ENCODE measurements at regions of chr3 and their contacts with region 1.

Region 1: DNA sequence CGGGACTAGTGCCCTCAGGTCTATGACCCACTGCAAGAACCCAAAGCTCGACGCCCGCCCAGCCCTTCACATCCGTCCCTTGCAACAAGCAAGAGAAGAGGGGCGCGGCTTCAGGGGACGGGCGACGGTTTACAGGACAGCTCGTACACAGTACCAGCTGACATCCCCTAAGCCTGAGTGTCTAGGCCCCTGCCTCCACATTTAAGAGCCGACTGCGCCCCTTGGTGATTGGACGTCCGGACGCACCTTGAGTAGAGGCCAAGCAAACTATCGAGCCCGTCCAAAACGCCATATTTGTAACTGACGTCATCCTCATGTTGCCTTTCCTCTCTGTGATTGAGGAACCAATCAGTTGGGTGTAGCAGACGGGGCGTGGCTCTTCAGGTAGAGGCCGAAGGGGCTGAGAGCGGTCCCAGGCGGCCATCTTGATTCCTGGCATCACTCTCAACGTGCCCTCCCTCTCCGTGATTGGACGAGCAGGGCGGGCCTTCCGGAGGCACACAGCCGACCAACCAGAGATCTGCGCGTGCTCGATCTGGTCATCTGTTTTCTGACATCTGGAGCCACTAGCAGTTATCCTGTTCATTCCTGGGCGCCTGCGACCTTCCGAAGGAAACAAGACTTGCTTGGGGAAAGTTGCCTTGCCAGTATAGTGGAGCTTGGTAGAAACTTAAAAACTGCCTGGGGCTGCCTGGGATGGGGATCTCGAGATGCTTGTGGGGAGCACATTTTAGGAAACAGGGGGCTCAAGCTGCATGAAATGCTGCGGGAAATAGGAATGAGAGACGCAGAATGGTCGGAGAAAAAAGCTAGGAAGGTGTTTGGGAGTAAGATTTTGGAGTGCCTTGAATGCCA is 4.0 kb upstream of the RPL14 start:
- DNase-seq: peak; percentile 99
- H3K4me3 ChIP-seq: peak overlapping the region; percentile 39 to 76 (median 54)
- H3K27ac ChIP-seq: peak overlapping the region; percentile 80 to 92 (median 88)
- H3K4me1 ChIP-seq: peaks cover 0 to 30% (median 25%) of the 10 kb centered on the region in 4 donors
- H3K27me3 ChIP-seq: no peaks in the 10 kb centered on the region
- CTCF ChIP-seq: no peak
- EP300 ChIP-seq: peak in 1 of 4 donors; percentile 37
- POLR2A ChIP-seq: peak; percentile 35 to 50

Region 2: GRCh38 chr3:39051647-39052561 is 1401.2 kb before region 1 on chr3 and contains the starts of genes SCN11A and WDR48:
- intact Hi-C with region 1: loop called (anchors 10 kb)
- DNase-seq: peak; percentile 97
- H3K4me3 ChIP-seq: peak within 1 kb of the TSS; percentile 92 to 99 (median 95)
- H3K27ac ChIP-seq: peak within 1 kb of the TSS; percentile 84 to 91 (median 87)
- H3K4me1 ChIP-seq: peaks cover 0 to 20% (median 16%) of the 10 kb centered on the region in 4 donors
- H3K27me3 ChIP-seq: no peaks in the 10 kb centered on the region
- CTCF ChIP-seq: no peak
- EP300 ChIP-seq: no peak
- POLR2A ChIP-seq: peak; percentile 69 to 83
- total RNA-seq, gene SCN11A: 0.82 to 3.0 (median 2.2) TPM
- total RNA-seq, gene WDR48: 37.4 to 50.2 (median 40.7) TPM

Region 3: DNA sequence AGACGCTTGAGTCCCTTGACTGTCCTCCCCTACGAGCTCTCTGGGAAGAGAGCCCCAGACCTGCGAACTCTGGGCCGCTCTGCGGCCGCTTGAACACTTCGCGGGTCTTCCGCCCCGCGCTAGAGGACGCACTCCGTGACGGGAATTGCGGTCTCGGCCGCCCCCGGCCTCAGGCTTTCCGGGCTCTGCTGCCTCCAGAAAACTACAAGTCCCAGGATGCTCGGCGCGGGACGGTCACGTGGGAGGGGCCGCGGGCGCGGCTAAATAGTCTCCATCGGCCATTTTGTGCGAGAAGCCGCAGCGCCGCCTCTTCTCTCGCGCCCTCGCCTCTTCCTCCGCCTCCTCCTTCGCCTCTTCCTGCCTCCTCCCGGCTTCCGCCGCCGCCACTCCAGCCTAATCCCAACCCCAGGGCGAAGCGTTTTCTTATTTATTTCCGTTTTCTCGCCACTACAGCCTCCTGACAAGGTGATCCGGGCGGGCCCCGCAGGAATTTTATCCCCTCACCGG is 143.6 kb before region 1 on chr3 and contains the start of gene EIF1B:
- intact Hi-C with region 1: loop called (anchors 2 kb)
- DNase-seq: peak; percentile 99
- H3K4me3 ChIP-seq: peak within 1 kb of the TSS; percentile 75 to 95 (median 90)
- H3K27ac ChIP-seq: peak within 1 kb of the TSS; percentile 90 to 99 (median 98)
- H3K4me1 ChIP-seq: peaks cover 0 to 34% (median 29%) of the 10 kb centered on the region in 4 donors
- H3K27me3 ChIP-seq: no peaks in the 10 kb centered on the region
- CTCF ChIP-seq: peak; percentile 61 to 84 (median 76)
- EP300 ChIP-seq: peak in 1 of 4 donors; percentile 30
- POLR2A ChIP-seq: peak; percentile 76 to 92
- total RNA-seq, gene EIF1B: 27.1 to 42.8 (median 39.5) TPM

Region 4: DNA sequence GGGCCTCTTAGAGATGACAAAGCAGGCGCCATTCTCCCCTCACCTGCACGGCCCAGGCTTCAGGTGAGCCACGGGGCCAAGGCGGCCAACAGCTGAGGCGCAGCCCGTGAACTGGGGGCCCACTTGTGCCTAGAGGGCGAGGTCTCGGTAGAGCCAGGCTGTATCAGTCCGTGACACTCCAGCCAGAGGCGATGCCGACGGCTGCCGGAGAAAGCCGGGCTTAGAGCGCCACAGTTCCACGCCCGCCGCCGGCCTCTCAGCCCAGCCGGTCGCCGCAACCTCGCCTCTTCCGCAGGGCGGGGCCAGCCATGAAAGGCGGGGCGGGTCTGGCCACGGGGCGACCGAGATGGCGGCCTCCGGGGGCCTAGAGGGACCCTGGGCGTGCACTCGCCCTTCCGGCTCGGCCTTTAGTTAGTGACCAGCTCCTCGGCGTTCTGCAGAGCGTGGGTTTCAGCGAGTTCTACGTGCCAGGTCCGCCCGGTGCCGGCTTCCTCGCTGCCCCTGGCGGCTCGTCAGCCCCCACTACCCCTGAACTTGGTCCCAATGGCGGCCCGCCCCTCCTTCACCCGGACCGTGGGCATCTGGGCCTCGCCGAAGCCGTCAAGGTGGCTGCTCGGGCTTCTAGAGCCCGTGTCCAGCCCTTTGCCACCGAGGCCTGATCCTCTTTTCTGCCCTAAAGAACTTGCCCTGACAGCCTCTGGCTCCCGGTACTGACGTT is 71.6 kb after region 1 on chr3 and contains the start of gene ZNF621:
- intact Hi-C with region 1: loop called (anchors 5 kb)
- DNase-seq: peak; percentile 94
- H3K4me3 ChIP-seq: peak within 1 kb of the TSS; percentile 64 to 88 (median 71)
- H3K27ac ChIP-seq: peak within 1 kb of the TSS; percentile 79 to 91 (median 86)
- H3K4me1 ChIP-seq: peaks cover 0 to 24% (median 10%) of the 10 kb centered on the region in 4 donors
- H3K27me3 ChIP-seq: no peaks in the 10 kb centered on the region
- CTCF ChIP-seq: no peak
- EP300 ChIP-seq: no peak
- POLR2A ChIP-seq: peak; percentile 64 to 85
- total RNA-seq, gene ZNF621: 13.2 to 19.9 (median 17.2) TPM

Region 5: DNA sequence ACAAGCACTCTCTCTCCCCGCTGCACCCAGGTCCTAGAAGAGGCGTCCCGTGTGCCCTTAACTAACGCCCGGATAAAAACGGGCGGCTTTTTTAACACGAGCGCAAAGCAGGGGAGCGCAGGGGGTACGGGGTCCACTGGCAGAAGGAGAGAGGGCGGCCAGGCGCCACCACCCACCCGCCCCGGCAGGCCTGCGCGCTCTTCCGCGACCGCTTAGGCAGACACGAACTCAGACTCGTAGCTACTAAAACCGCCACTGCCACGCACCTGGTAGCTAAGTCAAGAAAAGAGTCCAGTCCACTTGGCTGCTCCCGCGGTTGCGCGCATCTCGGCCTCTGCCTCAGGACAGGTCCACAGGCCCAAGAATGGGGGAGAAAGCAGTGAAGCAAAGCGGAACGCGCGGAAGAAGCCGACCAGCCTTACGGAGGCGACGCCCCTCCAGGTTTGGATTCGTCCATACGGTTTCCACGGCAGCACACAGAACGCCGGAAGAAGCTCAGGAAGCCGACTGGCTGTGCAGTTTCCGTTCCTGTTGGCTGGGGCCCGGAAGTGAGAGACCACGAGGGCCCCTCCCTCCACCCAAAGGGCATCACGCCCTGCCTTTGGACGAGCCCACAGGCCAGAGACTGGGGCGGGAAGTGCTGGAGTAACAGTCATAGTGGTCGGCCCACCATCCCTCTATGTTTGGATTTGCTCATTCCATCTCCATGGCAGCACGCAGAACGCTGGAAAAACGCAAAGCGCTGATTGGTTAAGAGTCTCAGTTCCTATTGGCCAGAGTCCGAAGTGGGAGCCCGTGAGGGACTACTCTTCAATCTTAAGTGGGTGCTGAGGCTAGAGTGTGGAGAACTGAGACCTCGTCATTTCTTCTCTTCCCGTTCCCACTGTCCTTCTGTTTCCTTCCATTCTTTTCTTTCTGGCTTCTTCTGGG is 1508.9 kb after region 1 on chr3 and contains the start of gene ULK4:
- intact Hi-C with region 1: loop called (anchors 5 kb)
- DNase-seq: peak; percentile 99
- H3K4me3 ChIP-seq: peak within 1 kb of the TSS; percentile 79 to 97 (median 90)
- H3K27ac ChIP-seq: peak within 1 kb of the TSS; percentile 88 to 93 (median 90)
- H3K4me1 ChIP-seq: peaks cover 0 to 14% (median 10%) of the 10 kb centered on the region in 4 donors
- H3K27me3 ChIP-seq: no peaks in the 10 kb centered on the region
- CTCF ChIP-seq: no peak
- EP300 ChIP-seq: peak in 1 of 4 donors; percentile 32
- POLR2A ChIP-seq: peak in 1 of 2 donors; percentile 7
- total RNA-seq, gene ULK4: 8.9 to 18.6 (median 16.6) TPM

Measured in sigmoid colon (tissue), 7 donors.